ENCODE measurements at regions of chr10 and their contacts with region 1.

Region 1: DNA sequence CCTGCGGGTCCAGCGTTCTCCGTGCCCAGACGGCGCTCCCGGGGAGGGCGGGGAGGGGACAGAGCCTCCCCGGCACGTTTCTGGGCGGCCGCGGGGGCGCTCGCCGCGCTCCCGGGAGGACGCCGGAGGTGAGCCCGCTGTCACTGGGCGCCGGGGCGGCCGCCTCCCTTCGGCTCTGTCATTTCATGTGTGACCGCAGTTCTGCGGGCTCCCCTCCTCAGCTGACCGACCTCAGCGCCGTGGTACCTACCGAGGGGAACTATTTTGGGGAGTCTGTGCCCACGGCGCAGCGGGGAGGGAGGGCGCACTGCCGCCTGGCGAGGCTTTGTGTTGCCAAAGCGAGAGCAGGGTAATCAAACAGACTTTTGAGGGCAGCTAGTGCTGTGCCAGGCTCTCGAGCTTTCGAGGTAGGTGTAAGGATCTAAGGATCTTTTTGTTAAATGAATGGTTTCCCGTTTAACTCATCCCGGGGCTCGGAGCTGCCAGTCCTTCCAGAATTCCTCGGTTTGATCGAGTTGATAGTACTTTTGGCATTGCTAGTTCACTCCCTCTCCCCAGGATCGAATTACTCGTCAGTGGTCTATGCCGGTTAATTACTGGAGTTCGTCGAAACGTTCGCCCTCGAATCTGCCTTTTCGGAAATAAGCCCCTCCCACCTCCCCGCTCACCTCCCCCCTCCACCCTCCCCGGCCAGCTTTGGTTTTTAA is 1.9 kb downstream of the ARID5B start:
- DNase-seq: peak; percentile 42 to 51
- H3K4me3 ChIP-seq: peak overlapping the region; percentile 76
- H3K27ac ChIP-seq: peak overlapping the region; percentile 43
- H3K4me1 ChIP-seq: peaks cover 31% of the 10 kb centered on the region
- H3K27me3 ChIP-seq: no peaks in the 10 kb centered on the region
- CTCF ChIP-seq: no peak

Region 2: DNA sequence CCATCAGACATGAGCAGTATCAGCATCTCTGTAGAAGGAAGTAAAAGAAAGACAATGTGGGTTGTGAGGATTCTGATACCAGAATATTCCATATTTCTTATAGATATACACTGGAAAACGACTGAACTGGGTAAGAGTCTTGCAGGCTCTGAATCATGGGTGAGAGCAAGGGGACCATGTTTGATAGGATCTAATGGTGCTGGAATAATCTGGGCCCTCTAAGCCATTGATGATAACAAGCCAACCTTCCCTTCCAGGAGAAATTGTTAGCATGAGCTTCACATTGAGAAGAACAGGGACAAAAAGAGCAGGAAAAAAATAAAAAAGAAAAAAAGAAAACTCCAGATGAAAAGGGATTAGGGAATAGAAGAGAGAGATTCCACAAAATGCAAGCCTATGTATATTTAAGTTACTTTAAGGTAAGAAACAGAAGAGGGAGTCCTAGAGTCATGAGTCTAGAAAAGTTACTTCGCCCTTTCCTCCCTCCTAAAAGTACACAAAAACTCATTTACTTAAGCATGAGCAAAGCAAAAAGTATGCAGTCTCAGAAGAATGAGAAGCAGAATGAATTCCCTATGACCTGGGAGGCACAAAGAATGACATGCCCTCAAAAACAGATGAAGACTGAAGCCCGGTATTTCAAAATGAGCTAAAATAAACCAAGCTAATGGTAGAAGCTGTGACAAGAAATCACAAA is 632.1 kb before region 1 on chr10:
- CTCF ChIA-PET with region 1: no interaction called
- POLR2A ChIA-PET with region 1: no interaction called
- intact Hi-C with region 1: loop called (anchors 5 kb)
- DNase-seq: peak in 1 of 2 experiments; percentile 84
- H3K4me3 ChIP-seq: no peak overlapping the region
- H3K27ac ChIP-seq: no peak overlapping the region
- H3K4me1 ChIP-seq: peaks cover 10% of the 10 kb centered on the region; the same call in 1 of the 2 replicates
- H3K27me3 ChIP-seq: no peaks in the 10 kb centered on the region
- CTCF ChIP-seq: peak; percentile 55

Region 3: GRCh38 chr10:61628875-61629513 is 274.4 kb before region 1 on chr10:
- CTCF ChIA-PET with region 1: no interaction called
- POLR2A ChIA-PET with region 1: no interaction called
- intact Hi-C with region 1: loop called (anchors 5 kb)
- DNase-seq: peak; percentile 27 to 92
- H3K4me3 ChIP-seq: no peak overlapping the region
- H3K27ac ChIP-seq: 0 out of 2 replicates have a peak overlapping the region, but pooled peaks have one; percentile 35
- H3K4me1 ChIP-seq: peaks cover 42% of the 10 kb centered on the region
- H3K27me3 ChIP-seq: no peaks in the 10 kb centered on the region
- CTCF ChIP-seq: no peak

Region 4: GRCh38 chr10:61786728-61787127 is 116.6 kb before region 1 on chr10:
- CTCF ChIA-PET with region 1: no interaction called
- POLR2A ChIA-PET with region 1: interaction called, 14 read pairs
- intact Hi-C with region 1: no loop called
- DNase-seq: peak; percentile 11 to 56
- H3K4me3 ChIP-seq: peak overlapping the region; percentile 46; the same call in 1 of the 2 replicates
- H3K27ac ChIP-seq: peak overlapping the region; percentile 51
- H3K4me1 ChIP-seq: peaks cover 26% of the 10 kb centered on the region
- H3K27me3 ChIP-seq: no peaks in the 10 kb centered on the region
- CTCF ChIP-seq: no peak

Region 5: GRCh38 chr10:61981402-61981841 is 78.0 kb after region 1 on chr10:
- CTCF ChIA-PET with region 1: interaction called, 3 read pairs
- POLR2A ChIA-PET with region 1: no interaction called
- intact Hi-C with region 1: loop called (anchors 1 kb)
- DNase-seq: peak; percentile 45 to 95
- H3K4me3 ChIP-seq: no peak overlapping the region
- H3K27ac ChIP-seq: peak overlapping the region; percentile 48
- H3K4me1 ChIP-seq: peaks cover 15% of the 10 kb centered on the region
- H3K27me3 ChIP-seq: no peaks in the 10 kb centered on the region
- CTCF ChIP-seq: no peak

Region 6: DNA sequence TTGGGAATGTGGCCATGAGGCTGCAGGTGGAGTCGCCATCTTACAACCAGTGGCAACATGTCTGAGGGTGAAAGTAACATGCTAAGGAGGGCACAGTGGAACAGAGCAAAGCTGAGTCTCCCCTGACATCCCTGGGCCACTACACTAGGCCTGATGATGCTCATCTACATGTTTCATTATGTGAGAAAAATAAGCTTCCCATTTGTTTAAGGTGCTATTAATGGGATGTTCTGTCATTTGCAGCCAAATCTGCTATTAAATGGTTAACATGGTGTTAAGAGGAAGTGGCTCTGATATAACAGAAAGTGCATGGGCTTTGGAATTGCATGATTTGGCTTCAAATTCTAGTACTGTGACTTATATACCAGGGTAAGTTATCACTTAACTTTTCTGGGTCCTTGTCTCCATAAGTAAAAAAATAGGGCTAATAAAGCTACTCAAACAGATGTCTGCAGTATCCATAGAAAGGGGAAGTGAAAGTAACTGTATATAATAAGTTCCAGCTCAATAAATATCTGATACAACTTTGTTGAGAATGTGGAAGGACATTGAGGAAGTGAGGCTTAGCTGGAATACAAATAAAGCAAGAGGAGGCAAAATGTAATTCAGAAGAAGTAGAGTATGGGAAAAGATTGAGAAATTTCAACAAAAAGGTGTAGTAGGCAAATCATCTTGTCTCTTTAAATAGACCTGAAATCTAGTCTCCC is 206.4 kb after region 1 on chr10:
- CTCF ChIA-PET with region 1: no interaction called
- POLR2A ChIA-PET with region 1: no interaction called
- intact Hi-C with region 1: loop called (anchors 1 kb)
- DNase-seq: no peak
- H3K4me3 ChIP-seq: no peak overlapping the region
- H3K27ac ChIP-seq: peak overlapping the region; percentile 49
- H3K4me1 ChIP-seq: peaks cover 80% of the 10 kb centered on the region
- H3K27me3 ChIP-seq: no peaks in the 10 kb centered on the region
- CTCF ChIP-seq: no peak

Region 7: GRCh38 chr10:63083904-63084689 is 1180.7 kb after region 1 on chr10:
- CTCF ChIA-PET with region 1: no interaction called
- POLR2A ChIA-PET with region 1: no interaction called
- intact Hi-C with region 1: loop called (anchors 10 kb)
- DNase-seq: peak; percentile 24 to 53
- H3K4me3 ChIP-seq: no peak overlapping the region
- H3K27ac ChIP-seq: no peak overlapping the region
- H3K4me1 ChIP-seq: no peaks in the 10 kb centered on the region
- H3K27me3 ChIP-seq: no peaks in the 10 kb centered on the region
- CTCF ChIP-seq: peak; percentile 84

Measured in PC-9 (cell line).